Caco-2 (cell line): ENCODE measurements at regions of chr11 and their contacts with region 1.

Region 1: DNA sequence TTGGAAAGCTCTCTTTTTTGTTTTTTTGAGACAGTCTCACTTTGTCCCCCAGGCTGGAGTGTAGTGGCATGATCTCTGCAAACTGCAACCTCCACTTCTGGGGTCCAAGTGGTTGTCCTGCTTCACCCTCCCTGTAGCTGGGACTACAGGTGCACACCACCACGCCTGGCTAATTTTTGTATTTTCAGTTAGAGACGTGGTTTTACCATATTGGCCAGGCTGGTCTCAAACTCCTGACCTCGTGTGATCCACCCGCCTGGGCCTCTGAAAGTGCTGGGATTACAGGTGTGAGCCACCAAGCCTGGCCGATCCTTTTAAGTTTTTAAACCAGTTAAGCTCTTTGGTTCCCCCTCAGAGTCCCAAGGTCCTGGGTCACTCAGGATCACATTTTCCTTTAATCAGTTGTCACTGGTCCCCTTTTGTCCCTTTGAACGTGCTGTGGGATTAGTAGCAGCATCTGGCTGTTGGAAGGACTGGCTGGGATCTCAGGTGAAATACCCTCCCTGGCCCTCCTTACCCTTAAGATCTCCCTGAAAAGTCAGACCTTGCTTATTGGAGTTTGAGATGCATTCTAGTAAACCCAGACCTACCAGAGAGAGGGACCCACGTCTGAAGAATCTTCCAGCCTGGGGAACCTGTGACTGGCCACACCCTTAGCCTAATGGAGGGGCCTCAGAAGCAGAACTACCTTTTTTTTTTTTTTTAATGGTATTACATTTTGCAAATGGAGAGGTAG is 8.1 kb downstream of the MALAT1 start:
- DNase-seq: peak; percentile 72 to 89
- H3K4me3 ChIP-seq: no peak overlapping the region
- H3K4me3 Mint-ChIP-seq: no peak overlapping the region
- H3K27ac Mint-ChIP-seq: no peak overlapping the region
- H3K4me1 ChIP-seq: peaks cover 34% of the 10 kb centered on the region
- H3K4me1 Mint-ChIP-seq: peaks cover 62% of the 10 kb centered on the region
- H3K27me3 ChIP-seq: no peaks in the 10 kb centered on the region
- H3K27me3 Mint-ChIP-seq: peaks cover 2% of the 10 kb centered on the region
- CTCF ChIP-seq: no peak

Region 2: GRCh38 chr11:64996710-64997380 is 510.1 kb before region 1 on chr11 and contains the start of gene BATF2:
- CTCF ChIA-PET with region 1: no interaction called
- POLR2A ChIA-PET with region 1: interaction called, 12 read pairs
- intact Hi-C with region 1: no loop called
- DNase-seq: peak; percentile 79 to 84
- H3K4me3 ChIP-seq: no peak within 1 kb of the TSS
- H3K4me3 Mint-ChIP-seq: peak within 1 kb of the TSS; percentile 56
- H3K27ac Mint-ChIP-seq: peak within 1 kb of the TSS; percentile 63
- H3K4me1 ChIP-seq: peaks cover 37% of the 10 kb centered on the region
- H3K4me1 Mint-ChIP-seq: peaks cover 26% of the 10 kb centered on the region
- H3K27me3 ChIP-seq: no peaks in the 10 kb centered on the region
- H3K27me3 Mint-ChIP-seq: no peaks in the 10 kb centered on the region
- CTCF ChIP-seq: peak; percentile 45 to 69
- total RNA-seq, gene BATF2: 0.79 and 1.4 TPM in 2 replicates

Region 3: DNA sequence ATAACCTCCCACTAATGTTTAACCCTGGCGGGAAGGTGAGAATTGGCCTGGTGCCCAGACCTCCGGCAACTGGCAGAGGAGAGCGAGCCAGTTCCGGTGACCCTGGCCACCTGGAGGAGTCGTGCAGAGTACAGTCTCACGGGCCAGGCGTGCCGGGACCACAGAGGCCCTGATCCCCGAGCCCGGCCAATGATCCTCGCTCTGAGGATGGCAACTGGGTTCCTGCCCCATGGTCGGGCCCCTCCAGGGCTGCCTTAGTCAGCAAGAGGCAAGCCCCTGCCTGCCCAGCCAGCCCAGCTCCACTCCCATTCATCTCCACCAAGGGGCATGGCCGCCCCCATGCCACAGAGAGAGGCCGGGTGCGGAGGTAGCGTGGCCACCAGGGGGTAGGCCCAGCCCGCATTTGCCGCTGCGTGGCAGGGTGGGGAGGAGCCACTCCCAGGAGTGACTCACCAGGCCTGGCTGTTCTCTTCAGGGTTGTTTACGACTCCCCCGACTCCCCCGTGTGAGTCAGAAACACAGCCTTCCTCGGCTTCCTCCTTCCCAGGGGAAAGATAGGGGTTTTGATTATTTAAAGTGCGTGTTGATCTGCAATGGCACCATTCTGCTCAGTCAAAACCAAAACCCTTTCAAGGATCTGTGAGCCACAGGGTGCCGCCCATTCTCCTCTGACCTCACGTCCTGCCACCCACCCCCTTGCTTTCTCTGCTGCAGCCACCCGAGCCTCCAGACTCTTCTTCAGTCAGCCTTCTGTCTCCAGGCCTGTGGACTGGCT is 124.7 kb before region 1 on chr11 and contains the start of gene SLC25A45:
- CTCF ChIA-PET with region 1: interaction called, 14 read pairs
- POLR2A ChIA-PET with region 1: no interaction called
- intact Hi-C with region 1: loop called (anchors 1 kb)
- DNase-seq: peak; percentile 93 to 94
- H3K4me3 ChIP-seq: peak within 1 kb of the TSS; percentile 39
- H3K4me3 Mint-ChIP-seq: peak within 1 kb of the TSS; percentile 69
- H3K27ac Mint-ChIP-seq: peak within 1 kb of the TSS; percentile 90
- H3K4me1 ChIP-seq: peaks cover 56% of the 10 kb centered on the region
- H3K4me1 Mint-ChIP-seq: peaks cover 28% of the 10 kb centered on the region
- H3K27me3 ChIP-seq: no peaks in the 10 kb centered on the region
- H3K27me3 Mint-ChIP-seq: no peaks in the 10 kb centered on the region
- CTCF ChIP-seq: peak; percentile 76 to 94
- total RNA-seq, gene SLC25A45: 8.1 and 8.5 TPM in 2 replicates

Region 4: DNA sequence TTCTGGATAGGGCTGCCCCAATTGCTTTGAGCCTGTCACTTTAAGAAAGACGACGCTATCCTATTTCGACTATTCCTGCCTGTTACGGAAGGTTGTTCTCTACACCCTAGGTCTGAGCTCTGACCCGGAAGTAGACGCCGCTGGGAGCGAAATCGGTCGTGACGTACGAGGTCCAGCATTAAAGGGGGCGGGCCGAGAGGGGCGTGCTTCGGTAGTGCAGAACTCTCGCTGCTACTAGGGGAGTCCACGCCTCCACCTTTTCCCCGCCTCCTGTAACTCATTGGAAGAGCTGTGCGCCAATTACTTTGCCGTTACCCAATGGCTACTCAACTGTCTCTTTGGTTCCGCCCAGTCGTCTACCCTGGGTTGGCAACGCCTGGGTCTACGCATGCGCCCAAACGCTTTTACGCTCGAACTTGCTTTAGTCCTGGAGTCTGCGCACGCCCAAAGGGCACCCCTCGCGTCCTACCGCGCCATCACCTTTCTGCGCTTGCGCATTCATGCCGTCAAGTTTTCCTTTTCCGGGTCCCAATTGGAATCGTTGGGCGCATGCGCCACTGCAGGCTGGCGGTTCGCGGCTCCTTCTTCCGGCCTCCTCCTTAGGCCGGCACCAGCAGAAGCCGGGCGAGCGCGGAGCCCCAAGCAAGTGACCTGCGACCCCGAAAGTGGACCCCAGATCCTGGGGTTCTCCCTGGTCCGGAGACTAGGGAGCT is 108.4 kb after region 1 on chr11 and contains the start of gene PCNX3:
- CTCF ChIA-PET with region 1: no interaction called
- POLR2A ChIA-PET with region 1: no interaction called
- intact Hi-C with region 1: no loop called
- DNase-seq: peak; percentile 100
- H3K4me3 ChIP-seq: peak within 1 kb of the TSS; percentile 91
- H3K4me3 Mint-ChIP-seq: peak within 1 kb of the TSS; percentile 96
- H3K27ac Mint-ChIP-seq: peak within 1 kb of the TSS; percentile 96
- H3K4me1 ChIP-seq: peaks cover 17% of the 10 kb centered on the region
- H3K4me1 Mint-ChIP-seq: peaks cover 24% of the 10 kb centered on the region
- H3K27me3 ChIP-seq: no peaks in the 10 kb centered on the region
- H3K27me3 Mint-ChIP-seq: no peaks in the 10 kb centered on the region
- CTCF ChIP-seq: no peak
- total RNA-seq, gene PCNX3: 52.7 and 52.8 TPM in 2 replicates